ENCODE measurements at regions of chr11 and their contacts with region 1.

Region 1: GRCh38 chr11:36289226-36289852 is at the start of gene COMMD9:
- DNase-seq: peak; percentile 56
- ATAC-seq: peak; percentile 98
- H3K4me3 ChIP-seq: peak within 1 kb of the TSS; percentile 93
- H3K27ac ChIP-seq: no peak within 1 kb of the TSS
- H3K4me1 ChIP-seq: peaks cover 3% of the 10 kb centered on the region; the same call in 1 of the 2 replicates
- H3K27me3 ChIP-seq: no peaks in the 10 kb centered on the region
- CTCF ChIP-seq: no peak
- EP300 ChIP-seq: no peak
- POLR2A ChIP-seq: peak; percentile 88
- RAD21 ChIP-seq: peak; percentile 19; the same call in 1 of the 2 replicates
- polyA plus RNA-seq, gene COMMD9: 102 to 119 TPM

Region 2: GRCh38 chr11:36478700-36479329 is 189.5 kb after region 1 on chr11:
- CTCF ChIA-PET with region 1: interaction called, 286 read pairs
- POLR2A ChIA-PET with region 1: no interaction called
- RAD21 ChIA-PET with region 1: interaction called, 106 read pairs
- SMC1A ChIA-PET with region 1: interaction called, 181 read pairs
- in situ Hi-C with region 1: no loop called
- intact Hi-C with region 1: loop called (anchors 1 kb)
- DNase-seq: no peak
- ATAC-seq: peak; percentile 79
- H3K4me3 ChIP-seq: no peak overlapping the region
- H3K27ac ChIP-seq: no peak overlapping the region
- H3K4me1 ChIP-seq: no peaks in the 10 kb centered on the region
- H3K27me3 ChIP-seq: no peaks in the 10 kb centered on the region
- CTCF ChIP-seq: peak; percentile 34 to 75 (median 52); a peak in 5 of 6 replicates
- EP300 ChIP-seq: no peak
- POLR2A ChIP-seq: no peak
- RAD21 ChIP-seq: peak; percentile 89

Region 3: GRCh38 chr11:36509694-36510566 is 220.6 kb after region 1 on chr11 and contains the start of gene TRAF6:
- CTCF ChIA-PET with region 1: interaction called, 18 read pairs
- POLR2A ChIA-PET with region 1: no interaction called
- RAD21 ChIA-PET with region 1: interaction called, 8 read pairs
- SMC1A ChIA-PET with region 1: interaction called, 4 read pairs
- in situ Hi-C with region 1: no loop called
- intact Hi-C with region 1: no loop called
- DNase-seq: no peak
- ATAC-seq: peak; percentile 98
- H3K4me3 ChIP-seq: peak within 1 kb of the TSS; percentile 86
- H3K27ac ChIP-seq: peak within 1 kb of the TSS; percentile 77
- H3K4me1 ChIP-seq: peaks cover 4% of the 10 kb centered on the region; the same call in 1 of the 2 replicates
- H3K27me3 ChIP-seq: no peaks in the 10 kb centered on the region
- CTCF ChIP-seq: peak; percentile 78 to 86 (median 86)
- EP300 ChIP-seq: no peak
- POLR2A ChIP-seq: peak; percentile 100
- RAD21 ChIP-seq: no peak
- polyA plus RNA-seq, gene TRAF6: 1.4 to 2.6 TPM

Region 4: DNA sequence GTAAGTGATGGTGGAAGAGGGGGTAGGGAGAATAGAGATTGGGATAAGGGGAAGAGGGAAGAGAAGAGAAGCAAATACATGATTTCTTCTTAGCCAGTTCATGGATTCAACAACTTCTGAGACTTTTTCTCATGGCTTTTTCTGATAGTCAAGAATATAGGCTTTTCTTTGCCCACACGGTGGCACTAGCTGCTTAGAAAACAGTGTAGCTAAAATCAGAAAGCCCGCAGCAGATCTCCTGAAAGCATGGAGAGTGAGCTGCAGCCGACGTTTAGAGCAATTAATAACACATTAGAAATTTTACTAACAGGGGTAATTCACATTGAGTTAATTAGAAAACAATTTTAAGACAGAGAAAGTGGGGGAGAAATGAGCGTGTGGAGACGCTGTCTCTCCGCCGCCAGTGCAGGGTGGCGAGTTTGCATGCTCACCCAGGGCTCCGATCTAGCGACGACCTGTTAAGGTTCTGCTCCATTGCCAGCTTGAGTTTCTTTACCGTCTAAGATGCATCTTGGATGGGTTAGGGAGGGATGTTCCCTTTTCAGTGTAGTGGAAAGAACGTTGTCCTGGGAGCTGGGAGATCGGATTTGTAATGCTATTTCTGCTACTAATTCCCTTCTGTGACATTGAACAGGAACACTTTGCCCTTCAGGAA is 275.2 kb after region 1 on chr11:
- CTCF ChIA-PET with region 1: interaction called, 12 read pairs
- POLR2A ChIA-PET with region 1: no interaction called
- RAD21 ChIA-PET with region 1: interaction called, 3 read pairs
- SMC1A ChIA-PET with region 1: interaction called, 4 read pairs
- in situ Hi-C with region 1: no loop called
- intact Hi-C with region 1: no loop called
- DNase-seq: peak; percentile 20
- ATAC-seq: peak; percentile 82
- H3K4me3 ChIP-seq: no peak overlapping the region
- H3K27ac ChIP-seq: no peak overlapping the region
- H3K4me1 ChIP-seq: no peaks in the 10 kb centered on the region
- H3K27me3 ChIP-seq: peaks cover 0 to 8% of the 10 kb centered on the region in 2 experiments; a peak in 1 of 4 replicates
- CTCF ChIP-seq: peak; percentile 43 to 73 (median 55); a peak in 5 of 6 replicates
- EP300 ChIP-seq: no peak
- POLR2A ChIP-seq: no peak
- RAD21 ChIP-seq: peak; percentile 89

Region 5: DNA sequence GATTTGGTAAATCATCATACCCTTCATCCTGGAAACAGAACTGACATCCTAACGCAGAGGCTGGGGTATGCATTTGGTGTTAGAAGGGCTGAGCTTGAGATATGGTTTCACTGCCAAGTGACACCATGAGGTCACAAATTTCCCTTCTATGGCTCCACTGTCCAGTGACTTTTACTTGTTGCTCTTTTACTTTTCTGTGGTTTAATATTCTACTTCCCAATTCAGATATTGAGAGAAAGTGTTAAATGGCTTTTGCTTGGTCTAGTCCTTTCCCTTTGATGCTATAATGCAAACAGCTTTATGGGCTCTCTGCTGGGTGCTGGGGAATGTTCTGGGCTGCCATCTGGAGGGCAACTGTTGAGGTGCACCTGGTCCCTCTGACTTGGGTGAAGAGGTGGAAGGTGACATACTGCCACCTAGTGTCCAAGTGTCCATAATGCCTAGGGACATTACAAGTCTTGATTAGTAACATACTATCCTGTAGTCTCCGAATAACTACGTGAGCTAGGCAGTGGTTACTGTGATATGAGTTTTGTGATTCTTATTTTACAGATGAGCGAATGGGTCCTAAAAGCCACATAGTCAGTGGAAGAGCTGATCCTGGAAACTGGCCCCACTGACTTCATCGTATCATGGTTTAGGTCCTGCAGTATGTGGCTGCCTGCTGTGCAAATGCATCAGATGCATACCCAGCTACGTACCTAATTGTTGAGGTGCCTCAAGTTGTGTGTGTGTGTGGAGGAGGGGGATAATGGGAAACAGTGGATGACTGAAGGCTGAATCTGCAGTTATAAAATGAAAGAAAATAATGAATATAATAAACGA is 457.8 kb after region 1 on chr11:
- CTCF ChIA-PET with region 1: interaction called, 17 read pairs
- POLR2A ChIA-PET with region 1: interaction called, 3 read pairs
- RAD21 ChIA-PET with region 1: interaction called, 5 read pairs
- SMC1A ChIA-PET with region 1: interaction called, 5 read pairs
- in situ Hi-C with region 1: loop called (anchors 5 kb)
- intact Hi-C with region 1: loop called (anchors 10 kb)
- DNase-seq: peak; percentile 71
- ATAC-seq: peak; percentile 93
- H3K4me3 ChIP-seq: no peak overlapping the region
- H3K27ac ChIP-seq: no peak overlapping the region
- H3K4me1 ChIP-seq: peaks cover 22% of the 10 kb centered on the region
- H3K27me3 ChIP-seq: no peaks in the 10 kb centered on the region
- CTCF ChIP-seq: peak; percentile 99 to 100 (median 100); a peak in 5 of 6 replicates
- EP300 ChIP-seq: no peak
- POLR2A ChIP-seq: no peak
- RAD21 ChIP-seq: peak; percentile 97